ENCODE measurements at regions of chr18 and their contacts with region 1.

Region 1: GRCh38 chr18:23452728-23453679 is at the start of gene RIOK3:
- DNase-seq: peak; percentile 86
- ATAC-seq: peak; percentile 97
- H3K4me3 ChIP-seq: peak within 1 kb of the TSS; percentile 84
- H3K27ac ChIP-seq: peak within 1 kb of the TSS; percentile 78
- H3K4me1 ChIP-seq: peaks cover 14% of the 10 kb centered on the region
- H3K27me3 ChIP-seq: no peaks in the 10 kb centered on the region
- CTCF ChIP-seq: no peak
- EP300 ChIP-seq: no peak
- POLR2A ChIP-seq: peak; percentile 99
- RAD21 ChIP-seq: no peak
- polyA plus RNA-seq, gene RIOK3: 18.0 to 28.1 TPM

Region 2: GRCh38 chr18:21600526-21601410 is 1852.2 kb before region 1 on chr18 and contains the start of gene ESCO1:
- CTCF ChIA-PET with region 1: no interaction called
- POLR2A ChIA-PET with region 1: no interaction called
- RAD21 ChIA-PET with region 1: no interaction called
- SMC1A ChIA-PET with region 1: no interaction called
- in situ Hi-C with region 1: loop called (anchors 25 kb)
- intact Hi-C with region 1: no loop called
- DNase-seq: peak; percentile 95
- ATAC-seq: peak; percentile 90
- H3K4me3 ChIP-seq: peak within 1 kb of the TSS; percentile 76
- H3K27ac ChIP-seq: peak within 1 kb of the TSS; percentile 90
- H3K4me1 ChIP-seq: peaks cover 27% of the 10 kb centered on the region
- H3K27me3 ChIP-seq: no peaks in the 10 kb centered on the region
- CTCF ChIP-seq: peak; percentile 90 to 95 (median 93)
- EP300 ChIP-seq: no peak; a peak in 1 of 4 replicates
- POLR2A ChIP-seq: peak; percentile 98
- RAD21 ChIP-seq: peak; percentile 38; the same call in 1 of the 2 replicates
- polyA plus RNA-seq, gene ESCO1: 9.6 to 11.2 TPM

Region 3: DNA sequence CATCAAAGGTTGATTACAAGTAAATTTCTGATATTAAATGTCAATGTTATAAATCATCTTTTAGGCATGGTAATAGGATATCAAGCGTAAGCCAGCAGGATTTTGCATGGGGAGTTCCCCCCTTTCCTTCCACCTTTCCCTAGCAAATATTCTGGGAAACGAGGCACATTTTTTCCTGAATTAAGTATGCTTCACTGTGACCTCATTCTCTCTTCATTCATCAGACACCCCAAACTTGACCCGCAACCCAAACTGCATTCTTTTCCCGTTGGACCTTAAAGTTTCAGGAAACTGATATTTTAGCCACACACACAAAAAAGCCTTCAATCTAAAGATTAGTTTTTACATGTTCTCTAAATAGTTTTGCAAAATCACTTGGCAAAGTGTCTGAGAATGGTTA is 820.8 kb before region 1 on chr18:
- CTCF ChIA-PET with region 1: no interaction called
- POLR2A ChIA-PET with region 1: no interaction called
- RAD21 ChIA-PET with region 1: no interaction called
- SMC1A ChIA-PET with region 1: no interaction called
- in situ Hi-C with region 1: no loop called
- intact Hi-C with region 1: no loop called
- DNase-seq: no peak
- ATAC-seq: no peak
- H3K4me3 ChIP-seq: no peak overlapping the region
- H3K27ac ChIP-seq: no peak overlapping the region
- H3K4me1 ChIP-seq: no peaks in the 10 kb centered on the region
- H3K27me3 ChIP-seq: no peaks in the 10 kb centered on the region
- CTCF ChIP-seq: no peak
- EP300 ChIP-seq: no peak
- POLR2A ChIP-seq: no peak
- RAD21 ChIP-seq: no peak

Region 4: DNA sequence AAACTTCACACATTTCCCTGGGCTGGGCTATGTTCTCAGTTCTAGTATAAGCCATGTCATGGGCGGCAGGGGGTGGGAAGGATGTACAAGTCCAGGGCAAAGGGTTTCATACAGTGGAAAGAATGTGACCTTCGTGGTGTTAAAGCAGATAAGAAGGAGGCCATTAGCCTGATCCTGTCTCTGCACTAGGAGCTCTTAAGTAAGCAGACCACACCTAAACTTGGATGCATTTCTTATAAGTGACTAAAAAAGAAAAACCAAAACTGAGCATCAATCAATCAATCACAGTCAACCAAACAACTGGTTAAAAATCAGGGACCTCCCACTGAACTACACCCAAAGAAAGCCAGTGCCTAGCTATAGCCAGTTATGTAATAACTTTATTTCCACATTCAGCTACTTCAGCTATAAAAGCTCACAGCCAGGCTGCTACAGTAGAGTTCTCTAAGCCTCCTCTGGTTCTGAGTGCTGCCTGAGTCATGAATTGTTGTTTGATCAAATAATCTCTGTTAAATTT is 46.7 kb before region 1 on chr18:
- CTCF ChIA-PET with region 1: interaction called, 3 read pairs
- POLR2A ChIA-PET with region 1: no interaction called
- RAD21 ChIA-PET with region 1: interaction called, 10 read pairs
- SMC1A ChIA-PET with region 1: interaction called, 3 read pairs
- in situ Hi-C with region 1: no loop called
- intact Hi-C with region 1: no loop called
- DNase-seq: no peak
- ATAC-seq: no peak
- H3K4me3 ChIP-seq: no peak overlapping the region
- H3K27ac ChIP-seq: no peak overlapping the region
- H3K4me1 ChIP-seq: no peaks in the 10 kb centered on the region
- H3K27me3 ChIP-seq: no peaks in the 10 kb centered on the region
- CTCF ChIP-seq: no peak
- EP300 ChIP-seq: no peak
- POLR2A ChIP-seq: no peak
- RAD21 ChIP-seq: no peak

Region 5: GRCh38 chr18:23422672-23423418 is 30.2 kb before region 1 on chr18:
- CTCF ChIA-PET with region 1: interaction called, 14 read pairs
- POLR2A ChIA-PET with region 1: interaction called, 10 read pairs
- RAD21 ChIA-PET with region 1: interaction called, 9 read pairs
- SMC1A ChIA-PET with region 1: interaction called, 8 read pairs
- in situ Hi-C with region 1: no loop called
- intact Hi-C with region 1: loop called (anchors 2 kb)
- DNase-seq: peak; percentile 92
- ATAC-seq: peak; percentile 96
- H3K4me3 ChIP-seq: peak overlapping the region; percentile 55; the same call in 1 of the 2 replicates
- H3K27ac ChIP-seq: peak overlapping the region; percentile 62
- H3K4me1 ChIP-seq: peaks cover 24% of the 10 kb centered on the region
- H3K27me3 ChIP-seq: no peaks in the 10 kb centered on the region
- CTCF ChIP-seq: peak in 2 of 3 experiments; percentile 26 to 27; a peak in 2 of 6 replicates
- EP300 ChIP-seq: peak; percentile 85 to 95
- POLR2A ChIP-seq: no peak
- RAD21 ChIP-seq: 0 out of 2 replicates have a peak, but pooled peaks have one; percentile 24

Region 6: GRCh38 chr18:23442655-23443357 is 10.2 kb before region 1 on chr18:
- CTCF ChIA-PET with region 1: interaction called, 4 read pairs
- POLR2A ChIA-PET with region 1: interaction called, 5 read pairs
- RAD21 ChIA-PET with region 1: interaction called, 4 read pairs
- SMC1A ChIA-PET with region 1: interaction called, 12 read pairs
- in situ Hi-C with region 1: no loop called
- intact Hi-C with region 1: no loop called
- DNase-seq: no peak
- ATAC-seq: no peak
- H3K4me3 ChIP-seq: no peak overlapping the region
- H3K27ac ChIP-seq: no peak overlapping the region
- H3K4me1 ChIP-seq: no peaks in the 10 kb centered on the region; the same call in 1 of the 2 replicates
- H3K27me3 ChIP-seq: no peaks in the 10 kb centered on the region
- CTCF ChIP-seq: no peak
- EP300 ChIP-seq: no peak
- POLR2A ChIP-seq: no peak
- RAD21 ChIP-seq: no peak

Region 7: GRCh38 chr18:23479829-23480505 is 27.0 kb after region 1 on chr18:
- CTCF ChIA-PET with region 1: interaction called, 7 read pairs
- POLR2A ChIA-PET with region 1: interaction called, 17 read pairs
- RAD21 ChIA-PET with region 1: interaction called, 6 read pairs
- SMC1A ChIA-PET with region 1: interaction called, 19 read pairs
- in situ Hi-C with region 1: no loop called
- intact Hi-C with region 1: no loop called
- DNase-seq: no peak
- ATAC-seq: peak; percentile 90
- H3K4me3 ChIP-seq: peak overlapping the region; percentile 29; the same call in 1 of the 2 replicates
- H3K27ac ChIP-seq: peak overlapping the region; percentile 73
- H3K4me1 ChIP-seq: peaks cover 19% of the 10 kb centered on the region
- H3K27me3 ChIP-seq: no peaks in the 10 kb centered on the region
- CTCF ChIP-seq: no peak
- EP300 ChIP-seq: no peak
- POLR2A ChIP-seq: no peak
- RAD21 ChIP-seq: no peak

Region 8: DNA sequence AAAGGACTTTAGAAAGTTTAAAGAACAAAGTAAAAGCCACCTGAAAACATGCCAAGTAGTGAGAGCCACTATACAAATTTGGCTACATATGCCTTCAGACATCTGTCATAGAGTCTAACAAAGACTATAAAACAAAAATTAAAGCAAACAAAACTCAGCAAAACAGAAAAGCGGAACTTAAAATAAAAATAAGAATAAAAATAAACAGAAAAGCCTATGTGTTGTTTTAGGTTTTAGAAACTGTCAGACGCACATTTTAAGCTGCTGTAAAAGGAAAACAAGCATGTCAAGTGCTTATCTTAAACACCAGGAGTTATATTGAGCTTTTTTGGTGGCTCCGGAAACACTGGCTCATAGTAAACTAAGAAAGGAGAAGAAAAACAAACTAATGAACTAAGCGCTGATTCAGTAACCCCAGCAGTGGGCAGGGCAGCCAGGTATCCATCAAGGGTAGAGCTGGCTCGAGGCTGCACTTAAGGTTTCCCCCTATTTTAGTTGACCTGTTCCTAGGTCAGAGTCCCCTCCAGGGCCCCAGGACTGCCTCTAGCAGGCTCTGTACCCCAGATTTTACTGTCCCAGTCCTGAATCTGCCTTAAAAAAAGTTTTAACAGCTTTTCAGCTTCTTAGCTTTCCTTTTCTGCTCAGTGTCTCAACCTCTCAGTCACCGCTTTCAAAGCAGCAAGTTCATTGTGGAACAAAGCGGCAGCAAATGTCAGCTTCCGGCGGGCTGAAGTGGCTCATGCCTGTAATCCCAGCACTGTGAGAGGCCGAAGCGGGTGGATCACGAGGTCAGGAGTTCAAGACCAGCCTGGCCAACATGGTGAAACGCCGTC is 35.0 kb after region 1 on chr18:
- CTCF ChIA-PET with region 1: interaction called, 6 read pairs
- POLR2A ChIA-PET with region 1: interaction called, 4 read pairs
- RAD21 ChIA-PET with region 1: interaction called, 10 read pairs
- SMC1A ChIA-PET with region 1: interaction called, 13 read pairs
- in situ Hi-C with region 1: no loop called
- intact Hi-C with region 1: no loop called
- DNase-seq: peak; percentile 62
- ATAC-seq: peak; percentile 92
- H3K4me3 ChIP-seq: peak overlapping the region; percentile 70
- H3K27ac ChIP-seq: peak overlapping the region; percentile 93
- H3K4me1 ChIP-seq: peaks cover 10% of the 10 kb centered on the region
- H3K27me3 ChIP-seq: no peaks in the 10 kb centered on the region
- CTCF ChIP-seq: no peak
- EP300 ChIP-seq: no peak
- POLR2A ChIP-seq: peak; percentile 43
- RAD21 ChIP-seq: no peak

Measured in GM12878 (cell line).